CD4-positive, alpha-beta memory T cell (primary cell): ENCODE measurements at regions of chr20 and their contacts with region 1.

Region 1: GRCh38 chr20:58209652-58210397 is 18.6 kb downstream of the ANKRD60 start:
- DNase-seq: peak; percentile 78 to 83 (median 80)
- H3K4me3 ChIP-seq: no peak overlapping the region
- H3K4me3 Mint-ChIP-seq: peak overlapping the region in 4 of 8 donors; percentile 1 to 70 (median 17)
- H3K27ac ChIP-seq: no peak overlapping the region
- H3K27ac Mint-ChIP-seq: peak overlapping the region; percentile 33 to 81 (median 58)
- H3K4me1 ChIP-seq: no peaks in the 10 kb centered on the region
- H3K4me1 Mint-ChIP-seq: peaks cover 0 to 4% (median 2%) of the 10 kb centered on the region in 4 donors
- H3K27me3 ChIP-seq: no peaks in the 10 kb centered on the region
- H3K27me3 Mint-ChIP-seq: peaks cover 3 to 12% of the 10 kb centered on the region in 2 donors

Region 2: DNA sequence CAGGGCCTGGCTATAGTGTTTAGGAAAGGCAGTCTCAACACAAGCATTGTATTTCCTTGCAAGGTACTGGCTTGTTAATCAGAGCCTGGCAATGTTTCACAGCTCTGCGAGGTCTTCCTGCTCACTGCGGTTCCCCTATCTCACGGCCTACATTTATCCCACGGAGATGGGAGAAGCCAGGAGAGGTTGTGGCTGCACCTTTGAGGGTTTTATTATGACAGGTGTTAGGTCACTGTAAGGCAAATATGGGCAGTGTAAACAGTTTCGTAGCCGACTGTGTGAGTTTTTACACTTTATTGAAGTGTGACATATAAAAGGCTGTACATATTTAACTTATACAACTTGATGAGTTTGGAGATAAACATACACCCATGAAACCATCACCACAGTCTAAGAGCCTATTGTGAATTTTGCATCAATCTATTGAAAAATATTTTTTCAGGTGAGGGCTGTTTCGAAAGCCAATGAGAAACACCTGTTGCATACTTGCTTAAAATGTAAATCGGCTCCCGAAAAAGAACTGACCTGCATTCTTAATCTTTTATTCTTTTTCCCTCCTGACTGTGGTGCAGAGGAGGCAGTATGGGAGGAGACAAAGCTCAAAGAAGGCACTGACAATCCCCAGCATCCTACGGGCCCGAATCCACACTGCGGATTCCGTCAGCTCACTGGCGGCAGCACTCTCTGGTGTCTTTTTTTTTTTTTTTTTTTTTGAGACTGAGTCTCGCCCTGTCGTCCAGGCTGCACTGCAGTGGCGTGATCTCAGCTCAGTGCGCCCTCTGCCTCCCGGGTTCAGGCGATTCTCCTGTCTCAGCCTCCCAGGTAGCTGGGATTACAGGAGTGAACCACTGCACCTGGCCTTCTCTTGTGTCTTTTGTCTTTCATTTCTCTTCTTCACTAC is 826.1 kb before region 1 on chr20:
- CTCF ChIA-PET with region 1: no interaction called
- POLR2A ChIA-PET with region 1: no interaction called
- intact Hi-C with region 1: loop called (anchors 1 kb)
- DNase-seq: no peak
- H3K4me3 ChIP-seq: no peak overlapping the region
- H3K4me3 Mint-ChIP-seq: no peak overlapping the region
- H3K27ac ChIP-seq: no peak overlapping the region
- H3K27ac Mint-ChIP-seq: peak overlapping the region in 2 of 7 donors; percentile 53 to 63
- H3K4me1 ChIP-seq: peaks cover 18% of the 10 kb centered on the region
- H3K4me1 Mint-ChIP-seq: peaks cover 12 to 27% (median 20%) of the 10 kb centered on the region in 4 donors
- H3K27me3 ChIP-seq: no peaks in the 10 kb centered on the region
- H3K27me3 Mint-ChIP-seq: no peaks in the 10 kb centered on the region

Region 3: GRCh38 chr20:57498425-57499400 is 711.1 kb before region 1 on chr20:
- CTCF ChIA-PET with region 1: interaction called, 4 read pairs
- POLR2A ChIA-PET with region 1: no interaction called
- intact Hi-C with region 1: loop called (anchors 10 kb)
- DNase-seq: peak in 3 of 5 donors; percentile 9 to 21 (median 11)
- H3K4me3 ChIP-seq: no peak overlapping the region
- H3K4me3 Mint-ChIP-seq: no peak overlapping the region
- H3K27ac ChIP-seq: no peak overlapping the region
- H3K27ac Mint-ChIP-seq: no peak overlapping the region
- H3K4me1 ChIP-seq: peaks cover 10% of the 10 kb centered on the region
- H3K4me1 Mint-ChIP-seq: peaks cover 10 to 14% (median 11%) of the 10 kb centered on the region in 4 donors
- H3K27me3 ChIP-seq: peaks cover 6% of the 10 kb centered on the region
- H3K27me3 Mint-ChIP-seq: peaks cover 23 to 43% of the 10 kb centered on the region in 2 donors

Region 4: GRCh38 chr20:57514273-57514751 is 695.5 kb before region 1 on chr20:
- CTCF ChIA-PET with region 1: interaction called, 4 read pairs
- POLR2A ChIA-PET with region 1: no interaction called
- intact Hi-C with region 1: loop called (anchors 2 kb)
- DNase-seq: peak in 2 of 5 donors; percentile 6 to 17
- H3K4me3 ChIP-seq: no peak overlapping the region
- H3K4me3 Mint-ChIP-seq: no peak overlapping the region
- H3K27ac ChIP-seq: no peak overlapping the region
- H3K27ac Mint-ChIP-seq: no peak overlapping the region
- H3K4me1 ChIP-seq: no peaks in the 10 kb centered on the region
- H3K4me1 Mint-ChIP-seq: no peaks in the 10 kb centered on the region
- H3K27me3 ChIP-seq: no peaks in the 10 kb centered on the region
- H3K27me3 Mint-ChIP-seq: peaks cover 2 to 10% of the 10 kb centered on the region in 2 donors

Region 5: DNA sequence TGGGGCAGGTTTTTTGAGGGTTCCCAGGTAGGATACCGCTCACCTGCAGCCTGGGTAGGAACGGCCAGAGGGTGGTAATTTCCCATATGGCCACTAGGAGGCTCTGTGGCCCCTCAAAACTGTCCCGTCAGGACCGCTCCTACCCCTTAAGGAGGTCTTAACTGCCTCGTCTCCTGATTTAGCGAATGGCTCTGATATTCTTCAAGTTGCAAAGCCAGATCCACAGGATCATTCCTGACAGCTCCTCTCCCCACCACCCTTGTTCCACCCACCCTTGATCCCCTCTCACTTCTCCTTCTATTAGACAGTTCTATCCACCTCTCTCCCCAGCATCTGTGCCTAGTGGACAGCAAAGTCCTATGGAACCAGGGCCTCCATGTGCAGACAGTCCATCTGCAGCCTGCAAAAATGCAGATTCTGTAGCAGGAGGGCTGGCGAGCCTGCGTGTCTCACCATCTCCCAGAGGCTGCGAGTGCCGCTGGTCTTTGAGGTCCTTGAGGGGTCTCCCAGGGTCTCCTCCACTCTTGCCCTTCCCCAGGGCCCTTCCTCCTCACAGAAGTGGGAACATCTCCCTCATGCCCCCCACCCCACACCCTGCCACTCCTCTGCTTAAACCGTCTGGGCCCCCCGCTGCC is 555.3 kb before region 1 on chr20:
- CTCF ChIA-PET with region 1: interaction called, 5 read pairs
- POLR2A ChIA-PET with region 1: no interaction called
- intact Hi-C with region 1: loop called (anchors 1 kb)
- DNase-seq: peak in 4 of 5 donors; percentile 45 to 55 (median 50)
- H3K4me3 ChIP-seq: no peak overlapping the region
- H3K4me3 Mint-ChIP-seq: peak overlapping the region in 2 of 8 donors; percentile 6 to 39
- H3K27ac ChIP-seq: no peak overlapping the region
- H3K27ac Mint-ChIP-seq: peak overlapping the region in 2 of 7 donors; percentile 76 to 80
- H3K4me1 ChIP-seq: peaks cover 17% of the 10 kb centered on the region
- H3K4me1 Mint-ChIP-seq: peaks cover 13 to 29% (median 21%) of the 10 kb centered on the region in 4 donors
- H3K27me3 ChIP-seq: no peaks in the 10 kb centered on the region
- H3K27me3 Mint-ChIP-seq: peaks cover 0 to 3% of the 10 kb centered on the region in 2 donors

Region 6: GRCh38 chr20:58179432-58180099 is 30.3 kb before region 1 on chr20:
- CTCF ChIA-PET with region 1: interaction called, 5 read pairs
- POLR2A ChIA-PET with region 1: no interaction called
- intact Hi-C with region 1: loop called (anchors 1 kb)
- DNase-seq: peak in 4 of 5 donors; percentile 57 to 66 (median 59)
- H3K4me3 ChIP-seq: no peak overlapping the region
- H3K4me3 Mint-ChIP-seq: peak overlapping the region; percentile 29 to 83 (median 72)
- H3K27ac ChIP-seq: no peak overlapping the region
- H3K27ac Mint-ChIP-seq: peak overlapping the region in 2 of 7 donors; percentile 22 to 36
- H3K4me1 ChIP-seq: peaks cover 10% of the 10 kb centered on the region
- H3K4me1 Mint-ChIP-seq: peaks cover 0 to 9% (median 4%) of the 10 kb centered on the region in 4 donors
- H3K27me3 ChIP-seq: peaks cover 8% of the 10 kb centered on the region
- H3K27me3 Mint-ChIP-seq: peaks cover 10 to 15% of the 10 kb centered on the region in 2 donors